OCI-LY7 (cell line): ENCODE measurements at regions of chr2 and their contacts with region 1.

Region 1: GRCh38 chr2:121736462-121737341 is at the start of gene NIFK:
- DNase-seq: peak; percentile 98
- H3K4me3 ChIP-seq: peak within 1 kb of the TSS; percentile 92
- H3K27ac ChIP-seq: peak within 1 kb of the TSS; percentile 61
- H3K4me1 ChIP-seq: peaks cover 16% of the 10 kb centered on the region
- CTCF ChIP-seq: no peak
- total RNA-seq, gene NIFK: 64.1 and 78.1 TPM in 2 replicates

Region 2: DNA sequence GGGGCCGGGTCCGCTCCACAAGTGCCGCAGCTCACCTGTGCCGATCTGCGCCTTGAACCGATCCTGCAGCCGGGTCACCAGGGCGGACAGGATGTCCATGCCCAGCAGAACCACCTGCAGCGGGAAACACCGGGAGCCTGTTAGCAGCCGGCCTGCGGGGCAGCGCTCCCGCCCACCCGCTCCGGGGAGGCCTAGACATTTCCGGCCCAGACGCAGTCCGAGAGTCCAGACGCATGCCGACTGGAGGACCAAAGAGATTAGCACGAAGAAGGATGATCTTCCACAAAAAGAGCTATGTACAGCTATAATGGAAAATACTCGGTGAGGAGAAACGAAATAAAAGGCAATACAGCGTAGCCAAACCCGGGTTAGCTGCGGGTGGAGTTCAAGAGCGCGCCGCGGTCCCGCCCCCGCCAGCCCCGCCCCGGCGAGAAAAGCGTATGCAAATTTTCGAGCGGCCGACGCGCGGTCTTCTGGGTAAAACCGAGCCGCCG is 206.4 kb before region 1 on chr2:
- CTCF ChIA-PET with region 1: no interaction called
- POLR2A ChIA-PET with region 1: interaction called, 6 read pairs
- intact Hi-C with region 1: loop called (anchors 5 kb)
- DNase-seq: peak; percentile 85
- H3K4me3 ChIP-seq: peak overlapping the region; percentile 92
- H3K27ac ChIP-seq: peak overlapping the region; percentile 94
- H3K4me1 ChIP-seq: peaks cover 37% of the 10 kb centered on the region
- CTCF ChIP-seq: no peak

Region 3: DNA sequence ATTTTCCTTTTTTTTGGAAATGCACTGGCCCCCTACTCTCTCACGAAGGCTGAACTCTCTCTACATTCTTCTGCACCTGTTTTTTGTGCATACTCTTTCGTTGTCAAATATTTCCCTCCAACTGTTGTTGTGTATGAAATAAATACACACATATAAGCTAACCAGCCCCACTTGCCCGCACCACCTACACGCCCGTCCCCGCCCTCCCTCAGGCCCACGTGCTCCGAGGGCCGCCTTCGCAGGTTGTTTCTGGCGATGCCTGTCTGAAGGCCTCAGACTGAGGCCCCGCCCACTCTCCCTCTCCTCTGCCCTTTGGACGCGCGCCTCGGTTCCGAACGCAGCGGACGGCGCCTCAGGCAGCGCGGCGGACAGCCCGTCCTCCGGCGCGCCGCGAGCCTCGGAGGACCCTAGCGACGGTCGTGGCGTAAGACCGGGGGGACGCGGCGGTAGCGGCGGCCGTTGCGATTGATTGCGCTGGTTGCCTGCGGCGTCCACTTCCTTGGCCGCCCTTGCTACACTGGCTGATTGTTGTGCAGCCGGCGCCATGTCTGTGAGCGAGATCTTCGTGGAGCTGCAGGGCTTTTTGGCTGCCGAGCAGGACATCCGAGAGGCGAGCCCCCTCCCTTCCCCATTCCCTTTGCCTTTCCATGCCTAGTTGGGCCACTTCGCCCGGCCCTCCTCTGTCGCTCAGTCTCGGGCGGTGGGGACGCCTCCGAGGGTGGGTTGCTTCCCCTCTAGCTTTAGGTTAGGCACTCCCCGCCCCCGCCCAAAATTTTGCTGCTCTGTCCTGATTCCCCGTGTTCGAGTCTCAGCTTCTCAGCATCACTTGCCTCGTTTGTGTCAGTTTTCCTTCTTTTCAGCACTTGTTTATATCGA is 18.8 kb after region 1 on chr2 and contains the start of gene TSN:
- CTCF ChIA-PET with region 1: no interaction called
- POLR2A ChIA-PET with region 1: interaction called, 6 read pairs
- intact Hi-C with region 1: loop called (anchors 1 kb)
- DNase-seq: peak; percentile 99
- H3K4me3 ChIP-seq: peak within 1 kb of the TSS; percentile 99
- H3K27ac ChIP-seq: peak within 1 kb of the TSS; percentile 63
- H3K4me1 ChIP-seq: peaks cover 29% of the 10 kb centered on the region
- CTCF ChIP-seq: no peak
- total RNA-seq, gene TSN: 59.2 and 64.4 TPM in 2 replicates

Region 4: GRCh38 chr2:121783180-121783579 is 46.5 kb after region 1 on chr2:
- CTCF ChIA-PET with region 1: no interaction called
- POLR2A ChIA-PET with region 1: no interaction called
- intact Hi-C with region 1: no loop called
- DNase-seq: no peak
- H3K4me3 ChIP-seq: no peak overlapping the region
- H3K27ac ChIP-seq: no peak overlapping the region
- H3K4me1 ChIP-seq: no peaks in the 10 kb centered on the region
- CTCF ChIP-seq: no peak

Region 5: GRCh38 chr2:121810959-121811853 is 74.5 kb after region 1 on chr2:
- CTCF ChIA-PET with region 1: no interaction called
- POLR2A ChIA-PET with region 1: interaction called, 3 read pairs
- intact Hi-C with region 1: loop called (anchors 2 kb)
- DNase-seq: peak; percentile 78
- H3K4me3 ChIP-seq: no peak overlapping the region
- H3K27ac ChIP-seq: no peak overlapping the region
- H3K4me1 ChIP-seq: peaks cover 20% of the 10 kb centered on the region
- CTCF ChIP-seq: peak; percentile 86

Region 6: DNA sequence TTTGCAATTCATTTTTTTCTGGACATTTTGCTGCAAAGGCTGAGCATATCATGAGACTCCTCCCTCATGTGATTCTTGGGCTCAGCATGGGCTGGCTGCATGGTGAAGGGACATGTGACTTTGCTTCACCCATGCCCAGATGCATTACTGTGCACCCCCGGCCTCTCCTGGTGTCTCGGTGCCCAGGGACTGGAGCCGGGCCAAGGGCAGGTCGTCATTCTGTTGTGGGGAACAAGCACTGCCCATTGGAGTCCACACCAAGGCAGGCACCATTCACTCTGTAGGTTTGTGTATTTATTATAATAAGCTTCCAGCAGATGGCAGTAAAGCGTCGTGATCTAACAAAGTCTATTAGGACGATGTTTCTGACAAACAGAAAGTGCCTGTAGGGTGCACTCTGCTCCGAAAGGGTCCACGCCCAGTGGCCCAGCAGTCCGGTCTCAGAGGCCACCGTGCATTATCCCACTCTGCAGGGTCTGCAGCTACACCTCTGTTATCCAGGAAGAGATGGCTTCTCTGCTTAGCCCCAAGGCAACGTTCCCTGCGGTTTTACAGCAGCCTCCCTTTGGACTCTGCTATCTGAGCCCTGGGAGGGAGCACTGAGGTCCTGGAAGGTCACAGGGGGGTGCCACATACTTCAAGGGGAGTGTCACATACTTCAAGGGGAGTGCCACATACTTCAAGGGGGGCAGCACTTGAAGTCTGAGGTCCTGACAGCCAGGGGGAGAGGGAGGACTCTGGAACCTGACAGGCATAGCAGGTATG is 238.4 kb after region 1 on chr2:
- CTCF ChIA-PET with region 1: no interaction called
- POLR2A ChIA-PET with region 1: no interaction called
- intact Hi-C with region 1: loop called (anchors 2 kb)
- DNase-seq: peak; percentile 86
- H3K4me3 ChIP-seq: peak overlapping the region; percentile 22
- H3K27ac ChIP-seq: no peak overlapping the region
- H3K4me1 ChIP-seq: no peaks in the 10 kb centered on the region
- CTCF ChIP-seq: peak; percentile 81